ENCODE measurements at regions of chr3 and their contacts with region 1.

Region 1: DNA sequence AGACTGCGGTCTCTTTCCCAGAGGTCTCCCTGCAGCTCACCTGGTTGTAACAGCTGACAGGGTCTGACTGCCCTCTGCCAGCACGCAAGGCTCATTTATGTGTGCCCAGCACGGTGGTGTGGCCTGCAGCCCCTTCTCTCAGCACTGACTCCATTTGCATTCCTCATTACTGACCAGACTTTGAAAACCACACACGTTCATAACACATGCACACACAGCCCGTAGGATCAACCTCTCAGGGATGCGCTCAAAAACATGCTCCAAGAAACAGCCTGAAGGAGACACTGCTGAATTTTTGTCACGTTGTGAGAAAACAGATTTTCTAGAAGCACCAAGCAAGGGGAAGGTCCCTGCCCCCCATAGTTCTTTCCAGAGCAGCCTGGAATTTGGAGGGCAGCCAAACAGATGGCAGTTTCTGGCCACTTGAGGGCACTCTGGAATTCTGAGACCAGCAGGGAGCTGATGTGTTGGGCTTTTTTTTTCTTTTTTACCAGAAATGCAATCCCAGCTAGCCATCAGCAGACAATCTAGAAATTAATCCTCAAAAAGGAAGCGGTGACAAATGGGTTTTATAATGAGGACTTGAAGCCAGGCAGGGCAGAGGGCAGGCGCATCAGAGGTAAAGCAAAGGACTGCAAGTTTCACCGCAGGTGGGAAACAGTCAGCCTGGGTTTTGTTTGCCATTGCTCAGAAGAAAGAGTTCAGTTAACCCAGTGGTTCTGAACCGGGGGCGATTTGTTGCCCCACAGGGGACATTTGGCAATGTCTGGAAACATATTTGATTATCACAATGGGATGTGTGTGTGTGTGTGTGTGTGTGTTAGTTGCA is 170.5 kb upstream of the PROK2 start:
- DNase-seq: peak; percentile 76 to 84
- H3K4me3 ChIP-seq: no peak overlapping the region
- H3K27ac ChIP-seq: no peak overlapping the region
- H3K4me1 ChIP-seq: peaks cover 0 to 7% (median 4%) of the 10 kb centered on the region in 4 donors
- H3K27me3 ChIP-seq: no peaks in the 10 kb centered on the region
- CTCF ChIP-seq: peak; percentile 77 to 82

Region 2: DNA sequence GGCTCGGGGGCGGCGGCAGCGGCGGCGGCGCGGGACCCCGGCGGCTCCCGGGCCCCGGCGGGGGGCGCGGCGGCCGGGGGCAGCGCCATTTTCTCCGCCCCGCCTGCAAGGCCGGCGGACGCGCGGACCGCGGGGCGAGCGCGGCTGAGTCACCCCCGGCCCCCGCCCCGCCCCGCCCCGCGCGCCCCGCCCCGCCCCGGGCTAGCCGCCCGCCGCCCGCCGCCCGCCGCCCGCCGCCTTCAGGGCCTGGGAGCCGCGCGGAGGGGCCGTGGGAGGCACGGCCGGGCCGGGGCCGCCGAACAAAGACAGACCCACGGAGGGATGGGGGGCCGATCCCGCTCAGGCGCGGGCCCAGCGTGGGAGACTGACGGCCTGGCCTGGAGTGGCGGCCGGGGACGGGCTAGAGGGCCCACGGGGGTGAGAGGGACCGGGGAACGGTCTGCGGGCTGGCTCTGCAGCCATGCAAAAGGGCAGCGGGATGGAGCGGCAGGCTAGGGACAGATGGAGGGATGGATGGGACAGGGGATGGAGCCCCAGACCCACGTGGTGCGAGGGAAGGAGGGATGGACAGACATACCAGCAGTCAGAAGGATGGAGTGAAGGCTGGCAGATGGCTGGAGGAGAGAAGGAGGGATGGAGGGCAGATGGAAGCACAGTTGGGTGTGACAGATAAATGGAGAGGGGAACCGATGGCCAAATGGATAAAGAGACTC is 230.0 kb before region 1 on chr3 and contains the start of gene EIF4E3:
- intact Hi-C with region 1: loop called (anchors 10 kb)
- DNase-seq: no peak
- H3K4me3 ChIP-seq: peak within 1 kb of the TSS; percentile 72 to 94
- H3K27ac ChIP-seq: peak within 1 kb of the TSS; percentile 73 to 76
- H3K4me1 ChIP-seq: peaks cover 0 to 17% (median 16%) of the 10 kb centered on the region in 4 donors
- H3K27me3 ChIP-seq: no peaks in the 10 kb centered on the region
- CTCF ChIP-seq: no peak

Region 3: DNA sequence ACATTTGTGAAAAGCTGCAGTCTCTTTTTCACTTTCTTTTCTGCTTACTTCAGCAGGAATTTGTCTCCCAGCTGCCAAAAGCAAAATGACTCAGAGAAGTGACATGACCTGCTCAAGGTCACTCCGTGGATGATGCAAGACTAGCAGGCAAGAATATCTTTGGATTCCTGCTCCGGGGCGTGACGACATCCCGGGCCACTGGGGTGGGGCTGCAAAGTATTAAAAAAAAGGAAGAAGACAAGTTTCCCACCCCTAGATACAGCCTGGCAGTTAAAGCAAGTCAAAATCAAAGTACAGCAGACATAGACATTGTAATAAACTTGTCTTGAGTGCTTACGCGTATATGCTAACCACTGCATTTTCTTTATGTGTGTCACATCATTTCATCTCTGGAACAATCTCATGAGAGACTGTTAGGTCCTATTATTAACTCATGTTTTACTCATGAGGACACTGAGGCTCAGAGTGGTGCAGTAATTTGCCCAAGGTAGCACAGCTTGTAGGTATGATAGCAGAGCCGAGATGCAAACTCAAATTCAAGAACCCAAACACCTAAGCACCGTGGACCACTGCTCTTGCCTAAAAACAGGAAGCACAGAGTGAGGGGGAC is 314.7 kb after region 1 on chr3:
- intact Hi-C with region 1: loop called (anchors 10 kb)
- DNase-seq: peak; percentile 95 to 97
- H3K4me3 ChIP-seq: no peak overlapping the region
- H3K27ac ChIP-seq: peak overlapping the region in 1 of 2 donors; percentile 47
- H3K4me1 ChIP-seq: peaks cover 0 to 36% (median 31%) of the 10 kb centered on the region in 4 donors
- H3K27me3 ChIP-seq: no peaks in the 10 kb centered on the region
- CTCF ChIP-seq: no peak

Measured in tibial artery (tissue), 4 donors.